Mammary epithelial cell (primary cell): ENCODE measurements at regions of chr3 and their contacts with region 1.

Region 1: GRCh38 chr3:128969993-128970739 is 23.7 kb downstream of the CFAP92 start:
- DNase-seq: no peak
- H3K4me3 ChIP-seq: no peak overlapping the region
- H3K27ac ChIP-seq: no peak overlapping the region
- H3K4me1 ChIP-seq: peaks cover 11% of the 10 kb centered on the region
- H3K27me3 ChIP-seq: no peaks in the 10 kb centered on the region
- CTCF ChIP-seq: peak; percentile 83 to 90

Region 2: GRCh38 chr3:128993461-128994173 is 23.5 kb after region 1 on chr3 and contains the start of gene CFAP92:
- CTCF ChIA-PET with region 1: no interaction called
- dilution Hi-C with region 1: no loop called
- in situ Hi-C with region 1: no loop called
- intact Hi-C with region 1: loop called (anchors 1 kb)
- DNase-seq: peak; percentile 81
- H3K4me3 ChIP-seq: peak within 1 kb of the TSS; percentile 30 to 57 (median 53)
- H3K27ac ChIP-seq: peak within 1 kb of the TSS; percentile 27
- H3K4me1 ChIP-seq: peaks cover 14% of the 10 kb centered on the region
- H3K27me3 ChIP-seq: no peaks in the 10 kb centered on the region
- CTCF ChIP-seq: peak in 1 of 2 donors; percentile 12
- total RNA-seq, gene CFAP92: 0.83 to 1.0 TPM

Region 3: DNA sequence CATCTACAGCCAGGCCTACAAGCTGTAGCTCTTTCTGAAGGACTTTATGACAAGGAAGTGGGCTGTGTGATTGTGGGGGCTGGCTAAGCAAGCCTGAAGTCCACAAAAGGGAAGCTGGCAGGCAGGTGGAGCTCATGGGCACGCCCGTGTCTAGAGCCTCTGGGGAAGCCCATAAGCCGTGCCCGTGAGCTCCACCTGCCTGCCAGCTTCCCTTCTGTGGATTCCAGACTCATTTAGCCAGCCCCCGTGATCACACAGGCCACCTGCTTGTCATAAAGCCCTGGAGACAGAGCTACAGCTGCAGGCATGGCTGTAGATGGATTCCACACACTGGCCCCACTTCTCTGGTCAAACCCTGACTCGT is 46.2 kb after region 1 on chr3:
- CTCF ChIA-PET with region 1: interaction called, 16 read pairs
- dilution Hi-C with region 1: no loop called
- in situ Hi-C with region 1: no loop called
- intact Hi-C with region 1: loop called (anchors 2 kb)
- DNase-seq: no peak
- H3K4me3 ChIP-seq: no peak overlapping the region
- H3K27ac ChIP-seq: no peak overlapping the region
- H3K4me1 ChIP-seq: no peaks in the 10 kb centered on the region
- H3K27me3 ChIP-seq: no peaks in the 10 kb centered on the region
- CTCF ChIP-seq: peak in 1 of 2 donors; percentile 45

Region 4: DNA sequence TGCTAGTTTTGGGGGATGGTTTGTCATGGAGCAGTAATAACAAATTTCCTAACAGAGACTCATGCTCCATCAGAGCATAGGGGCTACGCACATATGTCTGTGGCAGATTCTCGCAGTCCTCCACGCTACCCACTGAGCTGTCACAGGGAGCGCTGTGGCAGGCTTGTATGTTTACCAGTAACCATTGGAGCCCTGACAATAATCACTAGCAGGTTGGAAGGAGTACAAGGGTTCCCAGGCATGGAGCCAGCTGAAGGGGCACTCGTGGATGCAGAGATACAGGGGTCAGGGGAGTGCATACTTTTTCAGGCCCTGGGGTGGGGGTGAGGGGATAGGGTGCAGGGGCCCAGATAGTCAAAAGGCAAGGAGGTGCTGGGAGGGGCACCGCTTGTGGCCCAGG is 82.5 kb after region 1 on chr3:
- CTCF ChIA-PET with region 1: interaction called, 8 read pairs
- dilution Hi-C with region 1: no loop called
- in situ Hi-C with region 1: no loop called
- intact Hi-C with region 1: loop called (anchors 1 kb)
- DNase-seq: no peak
- H3K4me3 ChIP-seq: no peak overlapping the region
- H3K27ac ChIP-seq: no peak overlapping the region
- H3K4me1 ChIP-seq: no peaks in the 10 kb centered on the region
- H3K27me3 ChIP-seq: no peaks in the 10 kb centered on the region
- CTCF ChIP-seq: no peak

Region 5: DNA sequence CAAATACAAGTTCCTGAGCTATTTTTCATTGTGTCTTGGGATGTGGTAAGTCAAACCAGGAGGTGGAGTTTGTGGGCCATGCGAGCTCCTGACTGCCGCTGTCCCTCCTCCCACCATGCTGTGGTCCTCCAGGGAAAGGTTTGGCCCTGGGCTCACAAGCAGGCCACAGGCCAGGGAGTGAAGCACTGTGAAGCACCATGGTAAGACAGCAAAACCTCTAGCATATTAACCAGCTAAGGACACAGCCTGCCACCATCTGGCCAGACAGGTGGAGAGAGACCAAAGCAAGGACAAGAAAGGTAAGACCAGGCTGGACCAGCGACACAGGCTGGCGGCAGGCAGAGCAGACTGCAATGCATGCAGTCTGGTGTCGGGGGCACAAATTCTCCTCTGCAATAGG is 136.2 kb after region 1 on chr3:
- CTCF ChIA-PET with region 1: no interaction called
- dilution Hi-C with region 1: no loop called
- in situ Hi-C with region 1: no loop called
- intact Hi-C with region 1: loop called (anchors 5 kb)
- DNase-seq: no peak
- H3K4me3 ChIP-seq: no peak overlapping the region
- H3K27ac ChIP-seq: no peak overlapping the region
- H3K4me1 ChIP-seq: no peaks in the 10 kb centered on the region
- H3K27me3 ChIP-seq: no peaks in the 10 kb centered on the region
- CTCF ChIP-seq: no peak

Region 6: DNA sequence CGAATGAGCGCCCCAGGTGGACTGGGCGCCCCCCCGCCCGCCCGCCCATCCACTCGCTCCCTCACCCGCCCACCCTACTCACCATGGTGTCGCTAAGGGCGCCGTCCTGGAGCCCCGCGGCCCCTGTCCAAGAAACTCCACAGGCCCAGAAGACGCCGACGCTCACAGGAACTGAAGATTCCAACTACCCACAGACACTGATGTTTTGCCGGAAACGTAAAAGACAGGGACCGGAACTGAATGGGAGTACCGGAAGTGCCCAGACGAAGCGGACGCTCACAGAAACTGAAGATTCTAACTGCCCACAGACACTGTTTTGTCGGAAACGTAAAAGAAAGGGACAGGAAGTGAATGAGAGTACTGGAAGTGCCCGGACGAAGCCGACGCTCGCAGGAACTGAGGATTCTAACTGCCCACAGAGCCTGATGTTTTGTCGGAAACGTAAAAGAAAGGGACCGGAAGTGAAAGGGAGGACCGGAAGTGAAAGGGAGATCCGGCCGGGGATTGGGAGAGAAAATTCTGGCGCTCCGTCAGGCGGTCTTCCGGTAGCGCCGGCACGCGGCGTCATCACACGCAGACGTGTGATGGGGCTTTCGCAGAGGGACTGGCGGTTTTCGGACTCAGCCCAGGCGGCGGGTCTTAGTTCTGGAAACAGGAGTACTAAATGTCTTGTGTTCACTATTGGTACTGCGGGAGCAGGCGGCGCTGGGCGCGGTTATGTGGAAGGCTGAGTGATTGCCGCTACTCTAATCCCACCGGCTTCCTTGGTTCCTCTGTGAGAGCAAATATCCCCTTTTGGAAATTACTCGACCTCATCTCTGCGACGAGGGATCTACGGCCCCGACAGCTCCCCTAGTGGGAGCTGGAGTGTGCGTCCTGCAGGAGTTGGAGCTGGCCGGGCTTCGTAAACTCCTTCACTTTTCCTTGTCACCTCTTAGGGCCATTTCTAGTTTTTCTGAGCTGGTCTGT is 191.0 kb after region 1 on chr3 and contains the start of gene ISY1:
- CTCF ChIA-PET with region 1: interaction called, 6 read pairs
- dilution Hi-C with region 1: no loop called
- in situ Hi-C with region 1: no loop called
- intact Hi-C with region 1: loop called (anchors 1 kb)
- DNase-seq: peak; percentile 96
- H3K4me3 ChIP-seq: peak within 1 kb of the TSS; percentile 65 to 99 (median 96)
- H3K27ac ChIP-seq: peak within 1 kb of the TSS; percentile 90
- H3K4me1 ChIP-seq: peaks cover 19% of the 10 kb centered on the region
- H3K27me3 ChIP-seq: no peaks in the 10 kb centered on the region
- CTCF ChIP-seq: peak; percentile 85 to 96
- total RNA-seq, gene ISY1: 16.8 to 38.2 TPM

Region 7: DNA sequence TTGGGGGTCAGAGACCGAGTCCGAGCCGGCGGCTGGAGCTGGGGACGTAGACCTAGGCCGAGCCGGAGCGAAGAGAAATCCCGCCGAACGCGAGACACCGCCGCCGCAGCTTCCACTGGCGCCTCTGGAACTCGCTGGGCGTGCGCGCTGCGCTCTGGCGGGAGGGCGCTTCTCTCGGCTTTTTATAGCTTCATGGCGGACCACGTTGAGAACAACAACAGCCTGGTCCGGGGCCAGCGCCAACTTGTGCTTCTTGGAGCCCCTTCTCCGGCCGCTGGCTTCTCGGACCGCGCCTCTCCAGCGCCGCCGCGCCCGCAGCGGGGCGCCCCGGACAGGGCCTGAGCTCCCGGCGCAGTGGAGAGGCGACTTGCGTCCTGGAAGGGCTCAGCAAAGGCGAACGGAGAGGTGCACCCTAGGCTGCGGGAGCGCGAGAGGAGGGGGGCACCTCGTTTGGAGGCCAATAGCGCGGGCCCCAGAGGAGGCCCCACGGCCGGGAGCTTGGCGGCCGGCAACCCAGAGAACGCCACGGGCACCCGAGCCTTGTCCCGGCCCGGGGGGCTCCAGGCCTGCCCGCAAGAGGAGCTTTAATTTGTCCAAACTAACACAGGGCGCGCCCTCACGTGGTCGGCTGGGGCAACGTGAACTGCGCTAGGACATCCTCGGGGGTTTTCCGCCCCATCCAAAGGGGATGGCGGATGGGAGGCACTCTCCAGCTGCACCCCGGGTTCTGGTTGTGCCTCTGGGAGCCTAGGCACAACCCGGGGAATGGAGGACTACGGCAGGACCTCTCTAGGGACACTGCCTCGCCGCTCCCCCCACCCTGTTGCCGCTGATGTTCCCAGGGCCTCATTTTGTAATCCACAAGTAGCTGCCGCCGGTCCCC is 346.2 kb after region 1 on chr3:
- CTCF ChIA-PET with region 1: no interaction called
- dilution Hi-C with region 1: no loop called
- in situ Hi-C with region 1: no loop called
- intact Hi-C with region 1: loop called (anchors 2 kb)
- DNase-seq: peak; percentile 80
- H3K4me3 ChIP-seq: peak overlapping the region; percentile 67 to 94 (median 89)
- H3K27ac ChIP-seq: peak overlapping the region; percentile 72
- H3K4me1 ChIP-seq: peaks cover 21% of the 10 kb centered on the region
- H3K27me3 ChIP-seq: no peaks in the 10 kb centered on the region
- CTCF ChIP-seq: peak; percentile 32 to 58